Head of caudate nucleus (tissue), 42 donors: ENCODE measurements at regions of chr2 and their contacts with region 1.

Region 1: DNA sequence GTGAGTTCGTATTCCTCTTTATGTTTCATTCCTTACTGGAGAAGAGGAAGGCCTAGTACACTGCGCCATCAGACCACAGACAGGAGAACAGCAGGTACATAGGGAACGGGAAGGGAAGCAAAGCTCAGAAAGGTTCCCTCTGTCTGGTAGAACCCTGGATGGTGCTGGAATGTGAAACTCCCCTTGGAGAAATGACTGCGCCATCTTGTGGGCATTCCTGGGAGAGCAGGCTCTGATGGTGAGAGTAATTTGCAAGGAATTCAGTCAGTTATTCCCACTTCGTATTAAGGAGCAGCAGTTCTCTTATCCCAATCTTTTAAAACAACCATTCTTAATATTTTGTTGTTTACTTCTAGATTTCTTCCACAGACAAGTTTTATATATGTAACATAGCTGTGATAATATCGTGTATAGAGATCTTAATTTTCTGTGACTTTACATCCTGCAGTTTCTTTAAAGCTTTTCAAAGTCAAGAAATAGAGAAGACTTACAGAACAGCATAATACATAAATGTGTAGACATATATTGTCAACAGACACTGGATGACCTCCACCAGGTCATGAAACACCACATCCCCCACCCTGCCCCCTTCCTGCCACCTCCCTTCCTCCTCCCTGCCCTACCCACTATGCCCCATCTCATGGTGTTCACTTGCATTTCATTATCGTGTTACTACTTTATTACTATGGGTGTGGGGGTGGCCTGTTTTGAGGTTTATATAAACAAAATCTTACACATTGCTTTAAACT is 83.9 kb downstream of the ARHGEF4 start:
- DNase-seq: peak; percentile 51 to 96 (median 90)

Region 2: DNA sequence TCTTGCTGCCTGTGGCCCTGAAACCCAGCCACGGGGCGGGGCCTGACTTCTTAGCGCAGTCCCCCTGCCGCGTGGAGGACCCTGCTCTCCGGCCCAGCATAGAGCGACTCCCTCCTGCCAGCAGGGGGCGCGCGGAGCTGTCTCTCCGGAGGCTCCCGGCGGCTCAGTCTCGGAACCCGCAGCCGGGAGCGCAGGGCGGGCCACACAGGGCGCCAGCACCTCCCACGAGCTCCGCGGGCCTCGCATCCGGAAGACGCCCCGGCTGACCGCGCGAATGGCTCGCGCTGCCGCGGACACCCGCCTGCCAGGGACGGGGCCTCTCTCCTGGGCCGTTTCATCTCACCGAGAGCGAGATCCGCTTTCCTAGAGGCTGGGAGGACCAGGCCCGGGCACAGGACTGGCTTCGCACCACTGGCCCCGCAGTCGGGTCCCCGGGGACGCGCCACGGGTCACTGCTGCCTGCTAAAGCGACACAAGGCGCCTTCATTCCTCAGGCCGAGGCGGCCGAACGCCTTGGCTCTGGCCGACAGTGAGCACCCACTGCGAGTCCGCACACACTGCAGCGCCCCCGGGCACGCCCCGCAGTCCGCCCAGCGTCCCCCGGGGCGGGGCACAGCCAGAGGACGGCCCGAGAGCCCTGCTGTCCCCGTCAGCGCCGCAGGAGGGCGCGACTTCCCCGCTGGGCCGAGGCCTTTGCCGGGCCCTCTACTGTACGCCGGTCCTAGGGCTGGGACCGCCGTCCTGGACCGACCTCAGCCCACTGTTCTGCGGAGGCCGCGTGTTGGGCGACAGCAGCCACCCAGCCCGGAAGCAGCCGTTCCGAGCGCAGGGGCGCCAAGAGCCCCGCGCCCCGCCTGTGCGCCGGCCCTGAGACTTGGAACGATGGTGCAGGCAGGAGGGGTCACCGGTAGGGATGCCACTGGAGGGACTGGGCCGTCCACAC is 122.8 kb before region 1 on chr2:
- intact Hi-C with region 1: loop called (anchors 2 kb)
- DNase-seq: peak; percentile 77 to 99 (median 95)

Region 3: DNA sequence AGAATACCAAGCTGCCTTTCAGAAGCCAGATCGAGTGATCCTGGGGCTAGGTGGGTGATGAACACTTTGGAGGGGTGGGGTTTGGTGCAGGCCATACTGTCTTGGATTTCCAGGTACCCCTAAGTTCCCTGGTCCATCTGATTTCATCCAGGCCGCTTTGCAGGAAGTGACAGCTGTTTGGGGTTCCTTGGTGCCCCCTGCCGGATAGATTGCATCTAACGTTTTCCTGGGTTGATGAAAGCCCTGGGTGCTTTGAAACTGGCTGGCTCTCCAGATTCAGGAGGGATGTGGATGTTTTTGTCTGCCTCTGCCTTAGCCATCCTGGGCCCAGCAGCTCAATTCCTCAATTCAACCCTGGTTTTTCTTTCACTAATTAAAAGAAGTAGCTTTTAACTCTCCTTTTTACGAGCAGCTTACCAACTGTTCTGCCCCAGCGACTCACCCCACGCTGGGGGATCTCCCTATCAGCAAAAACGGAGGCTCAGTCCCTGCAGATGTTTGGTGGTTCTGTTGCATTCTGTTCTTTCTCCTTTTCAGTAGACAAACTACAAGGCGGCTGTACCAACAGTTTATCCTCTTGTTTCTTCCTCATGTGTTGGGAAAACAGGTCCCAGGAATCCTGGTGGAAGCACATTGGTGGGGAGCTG is 46.8 kb before region 1 on chr2:
- intact Hi-C with region 1: loop called (anchors 5 kb)
- DNase-seq: peak; percentile 65 to 95 (median 88)

Region 4: GRCh38 chr2:130899306-130899705 is 21.3 kb before region 1 on chr2:
- intact Hi-C with region 1: no loop called
- DNase-seq: peak in 1 of 42 donors; percentile 18

Region 5: GRCh38 chr2:131016826-131017741 is 96.5 kb after region 1 on chr2:
- intact Hi-C with region 1: no loop called
- DNase-seq: peak in 38 of 42 donors; percentile 33 to 91 (median 72)

Region 6: GRCh38 chr2:131145040-131145439 is 224.5 kb after region 1 on chr2:
- intact Hi-C with region 1: no loop called
- DNase-seq: no peak